Ascending aorta (tissue), 2 donors: ENCODE measurements at regions of chr13 and their contacts with region 1.

Region 1: DNA sequence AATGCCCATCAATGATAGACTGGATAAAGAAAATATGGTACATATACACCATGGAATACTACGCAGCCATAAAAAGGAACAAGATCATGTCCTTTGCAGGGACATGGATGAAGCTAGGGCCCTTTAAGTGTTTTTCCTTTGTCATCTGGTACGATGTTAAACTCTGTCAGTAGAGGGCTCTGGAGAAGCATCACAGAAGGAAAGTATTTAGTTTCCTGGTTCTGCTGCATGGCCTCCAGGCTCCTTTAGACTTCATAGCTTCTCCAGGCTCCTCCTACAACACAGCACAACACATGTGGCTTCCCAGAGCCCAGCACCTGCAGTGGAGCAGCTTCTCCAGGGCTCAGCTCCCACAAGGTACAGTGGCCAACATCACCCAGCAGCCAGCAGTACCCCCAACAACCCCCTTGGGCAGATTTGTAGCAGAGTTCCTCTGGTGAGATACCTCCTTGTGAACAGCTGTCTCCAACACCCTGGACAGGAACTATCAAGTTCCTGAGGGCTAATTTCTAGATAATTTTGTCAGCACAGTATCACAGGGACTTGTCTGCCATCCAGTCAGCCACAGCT is 63.4 kb downstream of the KCTD12 start:
- DNase-seq: no peak
- H3K4me3 ChIP-seq: no peak overlapping the region
- H3K27ac ChIP-seq: no peak overlapping the region
- H3K4me1 ChIP-seq: no peaks in the 10 kb centered on the region
- H3K27me3 ChIP-seq: no peaks in the 10 kb centered on the region
- CTCF ChIP-seq: peak; percentile 9 to 39 (median 19)

Region 2: GRCh38 chr13:76879203-76879882 is 56.6 kb after region 1 on chr13:
- intact Hi-C with region 1: no loop called
- DNase-seq: peak; percentile 57 to 91
- H3K4me3 ChIP-seq: peak overlapping the region in 1 of 2 donors; percentile 44
- H3K27ac ChIP-seq: peak overlapping the region; percentile 63 to 73
- H3K4me1 ChIP-seq: peaks cover 0 to 12% of the 10 kb centered on the region in 2 donors
- H3K27me3 ChIP-seq: no peaks in the 10 kb centered on the region
- CTCF ChIP-seq: no peak

Region 3: GRCh38 chr13:76903544-76904162 is 80.9 kb after region 1 on chr13:
- intact Hi-C with region 1: loop called (anchors 2 kb)
- DNase-seq: peak in 1 of 2 donors; percentile 85
- H3K4me3 ChIP-seq: no peak overlapping the region
- H3K27ac ChIP-seq: no peak overlapping the region
- H3K4me1 ChIP-seq: no peaks in the 10 kb centered on the region
- H3K27me3 ChIP-seq: no peaks in the 10 kb centered on the region
- CTCF ChIP-seq: peak; percentile 87 to 99 (median 96)